ENCODE measurements at regions of chr15 and their contacts with region 1.

Region 1: DNA sequence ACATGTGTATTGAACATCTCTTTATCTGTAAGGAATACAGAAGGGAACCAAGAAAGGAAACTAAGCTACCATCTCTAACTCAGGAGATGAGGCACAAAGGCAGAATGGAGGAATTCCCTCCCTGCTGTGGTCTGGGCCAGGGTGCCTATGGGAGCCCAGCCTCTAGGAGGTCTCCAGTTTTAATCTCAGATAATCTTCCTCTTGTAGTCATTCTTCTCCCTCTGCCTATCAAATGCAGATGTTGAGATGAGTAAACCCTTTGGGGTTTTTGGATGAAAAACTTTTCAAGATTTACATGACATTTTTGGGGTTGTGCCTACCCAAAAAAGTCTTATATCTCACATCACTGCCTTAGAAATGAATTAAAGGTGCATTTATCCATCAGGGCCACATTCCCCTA is 23.3 kb downstream of the SCG5 start:
- DNase-seq: no peak
- ATAC-seq: no peak
- H3K4me3 ChIP-seq: no peak overlapping the region
- H3K27ac ChIP-seq: no peak overlapping the region
- H3K4me1 ChIP-seq: peaks cover 0 to 4% of the 10 kb centered on the region in 2 experiments; a peak in 3 of 5 replicates
- H3K27me3 ChIP-seq: peaks cover 0 to 3% of the 10 kb centered on the region in 2 experiments; a peak in 1 of 5 replicates
- CTCF ChIP-seq: no peak
- EP300 ChIP-seq: no peak
- POLR2A ChIP-seq: no peak
- RAD21 ChIP-seq: no peak

Region 2: GRCh38 chr15:32994810-32995424 is 330.1 kb after region 1 on chr15:
- CTCF ChIA-PET with region 1: interaction called, 34 read pairs
- POLR2A ChIA-PET with region 1: no interaction called
- in situ Hi-C with region 1: loop called (anchors 5 kb)
- intact Hi-C with region 1: loop called (anchors 1 kb)
- DNase-seq: peak; percentile 23 to 26 (median 25)
- ATAC-seq: peak; percentile 71
- H3K4me3 ChIP-seq: no peak overlapping the region
- H3K27ac ChIP-seq: no peak overlapping the region
- H3K4me1 ChIP-seq: no peaks in the 10 kb centered on the region
- H3K27me3 ChIP-seq: no peaks in the 10 kb centered on the region; a peak in 2 of 5 replicates
- CTCF ChIP-seq: peak in 2 of 3 experiments; percentile 22 to 64; a peak in 3 of 6 replicates
- EP300 ChIP-seq: no peak
- POLR2A ChIP-seq: no peak
- RAD21 ChIP-seq: peak; percentile 33 to 54